PC-3 (cell line): ENCODE measurements at regions of chr4 and their contacts with region 1.

Region 1: GRCh38 chr4:26459054-26459755 is 31.1 kb downstream of the CCKAR start:
- DNase-seq: peak; percentile 65
- ATAC-seq: peak; percentile 67
- H3K4me3 ChIP-seq: peak overlapping the region; percentile 55; the same call in 1 of the 2 replicates
- H3K27ac ChIP-seq: no peak overlapping the region
- H3K4me1 ChIP-seq: no peaks in the 10 kb centered on the region; the same call in 1 of the 2 replicates
- H3K27me3 ChIP-seq: no peaks in the 10 kb centered on the region
- CTCF ChIP-seq: peak; percentile 68

Region 2: DNA sequence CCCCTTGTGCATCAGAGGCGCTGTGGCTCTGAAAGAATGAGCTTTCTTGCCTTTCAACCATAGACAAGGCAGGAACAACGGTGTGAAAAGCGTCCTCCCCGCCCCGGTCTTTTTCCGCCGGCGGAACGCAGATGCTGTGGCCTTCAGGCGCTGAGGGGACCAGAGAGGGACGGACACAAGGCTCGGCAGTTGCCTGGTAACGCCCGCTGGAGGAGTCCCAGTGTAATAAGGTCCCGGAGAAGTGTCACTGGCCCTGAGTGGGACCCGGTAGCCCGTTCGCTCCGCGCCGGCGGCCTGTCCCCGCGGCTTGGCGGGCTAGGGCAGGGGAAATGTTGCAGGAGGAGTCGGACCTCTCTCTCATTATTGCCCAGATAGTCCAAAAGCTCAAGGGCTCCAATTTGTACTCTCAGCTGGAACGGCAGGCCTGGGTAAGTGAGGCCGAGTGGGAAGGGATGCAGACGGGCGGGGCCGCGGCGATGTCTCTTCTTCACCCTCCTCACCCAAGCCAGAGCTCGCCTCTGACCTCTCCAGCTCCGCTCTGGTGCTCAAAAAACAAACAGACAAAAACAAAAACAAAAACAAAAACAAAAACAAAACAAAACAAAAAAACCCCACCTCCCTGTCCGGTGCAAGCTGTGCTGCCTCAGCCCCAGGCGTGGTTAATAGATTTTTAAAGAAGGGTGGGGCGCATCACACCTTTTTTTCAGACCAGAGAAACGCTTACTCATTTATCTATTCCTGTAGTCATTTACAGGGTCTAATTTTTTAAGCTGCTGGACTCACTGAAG is 124.9 kb after region 1 on chr4 and contains the start of gene TBC1D19:
- CTCF ChIA-PET with region 1: no interaction called
- POLR2A ChIA-PET with region 1: no interaction called
- intact Hi-C with region 1: loop called (anchors 5 kb)
- DNase-seq: peak; percentile 84
- ATAC-seq: peak; percentile 98
- H3K4me3 ChIP-seq: peak within 1 kb of the TSS; percentile 86
- H3K27ac ChIP-seq: peak within 1 kb of the TSS; percentile 69
- H3K4me1 ChIP-seq: peaks cover 8% of the 10 kb centered on the region
- H3K27me3 ChIP-seq: no peaks in the 10 kb centered on the region
- CTCF ChIP-seq: no peak
- total RNA-seq, gene TBC1D19: 4.0 and 4.5 TPM in 2 replicates

Region 3: GRCh38 chr4:26719954-26720552 is 260.8 kb after region 1 on chr4:
- CTCF ChIA-PET with region 1: no interaction called
- POLR2A ChIA-PET with region 1: no interaction called
- intact Hi-C with region 1: loop called (anchors 1 kb)
- DNase-seq: peak; percentile 44
- ATAC-seq: peak; percentile 27; the same call in 1 of the 2 replicates
- H3K4me3 ChIP-seq: no peak overlapping the region
- H3K27ac ChIP-seq: no peak overlapping the region
- H3K4me1 ChIP-seq: peaks cover 9% of the 10 kb centered on the region
- H3K27me3 ChIP-seq: no peaks in the 10 kb centered on the region
- CTCF ChIP-seq: peak; percentile 72

Region 4: GRCh38 chr4:27010334-27010940 is 551.2 kb after region 1 on chr4:
- CTCF ChIA-PET with region 1: no interaction called
- POLR2A ChIA-PET with region 1: no interaction called
- intact Hi-C with region 1: loop called (anchors 2 kb)
- DNase-seq: peak; percentile 66
- ATAC-seq: peak; percentile 25; the same call in 1 of the 2 replicates
- H3K4me3 ChIP-seq: no peak overlapping the region
- H3K27ac ChIP-seq: no peak overlapping the region; the same call in 1 of the 2 replicates
- H3K4me1 ChIP-seq: peaks cover 53% of the 10 kb centered on the region
- H3K27me3 ChIP-seq: no peaks in the 10 kb centered on the region
- CTCF ChIP-seq: peak; percentile 73